ENCODE measurements at regions of chr16 and their contacts with region 1.

Region 1: GRCh38 chr16:31785126-31785525 is 88.5 kb upstream of the ZNF267 start:
- DNase-seq: no peak
- H3K4me3 ChIP-seq: no peak overlapping the region
- H3K27ac ChIP-seq: no peak overlapping the region
- H3K4me1 ChIP-seq: no peaks in the 10 kb centered on the region
- H3K27me3 ChIP-seq: no peaks in the 10 kb centered on the region
- CTCF ChIP-seq: no peak

Region 2: GRCh38 chr16:31713071-31713944 is 71.8 kb before region 1 on chr16:
- CTCF ChIA-PET with region 1: no interaction called
- dilution Hi-C with region 1: no loop called
- in situ Hi-C with region 1: no loop called
- intact Hi-C with region 1: no loop called
- DNase-seq: peak; percentile 90
- H3K4me3 ChIP-seq: peak overlapping the region; percentile 90 to 98 (median 94)
- H3K27ac ChIP-seq: peak overlapping the region; percentile 89
- H3K4me1 ChIP-seq: peaks cover 15% of the 10 kb centered on the region
- H3K27me3 ChIP-seq: no peaks in the 10 kb centered on the region
- CTCF ChIP-seq: no peak

Region 3: DNA sequence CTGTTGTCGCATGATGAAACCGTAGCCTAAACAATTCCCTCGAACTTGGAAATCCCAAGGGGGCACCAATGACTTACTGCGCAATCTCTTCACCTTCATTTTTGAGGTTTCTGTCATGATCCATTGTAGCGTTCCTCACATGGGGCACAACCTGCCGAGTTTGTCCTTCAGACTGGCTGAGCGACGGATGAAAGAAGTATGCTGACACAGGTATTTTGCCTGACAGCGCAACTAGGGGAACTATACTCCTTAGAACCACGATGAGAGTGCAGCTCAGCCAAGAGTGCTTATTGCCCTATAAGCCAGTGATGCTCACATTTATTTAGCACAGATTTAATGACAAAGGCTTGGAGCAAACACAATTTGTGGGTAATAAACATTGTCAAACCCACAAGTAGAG is 17.9 kb before region 1 on chr16:
- CTCF ChIA-PET with region 1: interaction called, 21 read pairs
- dilution Hi-C with region 1: no loop called
- in situ Hi-C with region 1: no loop called
- intact Hi-C with region 1: no loop called
- DNase-seq: no peak
- H3K4me3 ChIP-seq: no peak overlapping the region
- H3K27ac ChIP-seq: no peak overlapping the region
- H3K4me1 ChIP-seq: no peaks in the 10 kb centered on the region
- H3K27me3 ChIP-seq: no peaks in the 10 kb centered on the region
- CTCF ChIP-seq: no peak

Region 4: DNA sequence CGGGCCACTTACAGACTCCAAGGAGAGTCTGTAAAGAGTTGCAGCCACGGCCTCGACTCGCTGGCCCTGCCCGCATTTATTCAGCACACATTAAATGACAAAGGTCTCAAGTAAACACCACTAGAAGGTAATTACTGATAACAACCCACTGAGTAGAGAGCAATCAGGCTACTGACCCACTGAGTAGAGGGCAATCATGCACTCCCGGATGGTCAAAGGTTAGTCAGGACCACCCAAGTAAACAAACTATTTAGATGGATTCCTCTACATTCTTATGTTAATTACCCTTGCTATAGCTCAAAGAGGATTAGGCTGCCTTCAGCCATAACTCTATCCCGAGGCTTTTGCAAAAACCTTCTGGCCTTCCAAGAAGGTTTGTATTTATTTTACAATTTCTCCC is 57.7 kb after region 1 on chr16:
- CTCF ChIA-PET with region 1: no interaction called
- dilution Hi-C with region 1: no loop called
- in situ Hi-C with region 1: loop called in 1 of 2 experiments (anchors 5 kb)
- intact Hi-C with region 1: no loop called
- DNase-seq: no peak
- H3K4me3 ChIP-seq: no peak overlapping the region
- H3K27ac ChIP-seq: no peak overlapping the region
- H3K4me1 ChIP-seq: no peaks in the 10 kb centered on the region
- H3K27me3 ChIP-seq: no peaks in the 10 kb centered on the region
- CTCF ChIP-seq: no peak

Region 5: DNA sequence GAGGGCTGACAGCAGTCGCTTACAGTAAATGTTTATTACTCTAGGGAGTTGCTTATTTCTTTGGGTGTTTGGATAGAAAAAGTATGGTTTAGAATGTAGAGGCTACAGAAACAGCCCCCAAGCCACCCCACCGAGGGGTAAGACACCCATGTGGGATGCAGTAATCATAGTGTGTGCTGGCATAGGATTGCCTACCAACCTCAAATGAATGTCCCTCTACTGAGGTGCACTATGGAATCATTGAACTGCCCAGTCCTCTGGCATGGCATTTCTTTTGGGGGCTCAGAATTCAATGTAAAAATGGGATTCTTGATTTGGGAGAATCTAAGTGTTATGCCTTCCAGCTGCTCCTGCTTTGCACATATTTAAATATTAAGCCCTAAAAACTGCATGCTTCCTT is 135.2 kb after region 1 on chr16:
- CTCF ChIA-PET with region 1: no interaction called
- dilution Hi-C with region 1: no loop called
- in situ Hi-C with region 1: loop called in 1 of 2 experiments (anchors 25 kb)
- intact Hi-C with region 1: no loop called
- DNase-seq: no peak
- H3K4me3 ChIP-seq: no peak overlapping the region
- H3K27ac ChIP-seq: no peak overlapping the region
- H3K4me1 ChIP-seq: no peaks in the 10 kb centered on the region
- H3K27me3 ChIP-seq: no peaks in the 10 kb centered on the region
- CTCF ChIP-seq: no peak

Measured in mammary epithelial cell (primary cell).